Panc1 (cell line): ENCODE measurements at regions of chr2 and their contacts with region 1.

Region 1: DNA sequence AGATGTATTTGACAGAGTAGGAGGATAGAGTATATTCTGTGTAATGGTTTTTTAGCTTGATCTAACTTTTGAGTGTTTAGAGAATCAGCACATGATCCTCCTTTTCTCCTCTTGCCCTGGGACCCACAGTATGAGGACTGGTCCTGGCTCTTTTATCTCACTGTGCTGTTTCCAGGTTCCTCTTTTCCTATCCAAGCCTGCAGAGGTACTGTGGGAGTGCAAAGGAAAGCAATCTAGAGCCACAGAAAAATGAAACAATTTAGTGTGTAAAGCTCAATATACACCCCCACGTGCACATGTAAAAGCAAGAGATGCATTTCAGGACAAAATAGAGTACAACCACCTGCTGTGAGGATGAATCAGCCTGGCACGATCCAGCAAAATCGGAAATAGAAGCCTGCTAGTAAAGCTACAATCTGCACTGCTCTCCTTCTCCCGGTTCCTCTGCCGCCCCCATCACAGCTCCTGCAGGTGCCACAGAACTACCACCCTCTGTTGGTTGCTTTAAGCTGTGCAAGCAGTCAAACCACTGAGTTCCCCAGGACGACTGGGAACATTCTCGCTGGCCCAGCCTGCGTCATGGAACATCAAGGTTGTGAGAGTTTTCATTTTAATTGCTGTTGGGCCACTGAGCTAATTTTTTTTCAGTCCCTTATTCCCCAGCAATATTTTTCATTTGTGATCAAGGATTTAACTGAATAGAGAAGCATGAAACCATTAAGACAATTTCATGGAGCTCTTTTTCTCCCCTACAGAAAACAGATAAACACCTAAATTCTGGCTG is 47.8 kb upstream of the MAPRE3 start:
- DNase-seq: peak; percentile 13
- ATAC-seq: peak; percentile 92
- H3K4me3 ChIP-seq: no peak overlapping the region
- H3K27ac ChIP-seq: no peak overlapping the region
- H3K4me1 ChIP-seq: no peaks in the 10 kb centered on the region
- H3K27me3 ChIP-seq: no peaks in the 10 kb centered on the region
- CTCF ChIP-seq: peak; percentile 81

Region 2: DNA sequence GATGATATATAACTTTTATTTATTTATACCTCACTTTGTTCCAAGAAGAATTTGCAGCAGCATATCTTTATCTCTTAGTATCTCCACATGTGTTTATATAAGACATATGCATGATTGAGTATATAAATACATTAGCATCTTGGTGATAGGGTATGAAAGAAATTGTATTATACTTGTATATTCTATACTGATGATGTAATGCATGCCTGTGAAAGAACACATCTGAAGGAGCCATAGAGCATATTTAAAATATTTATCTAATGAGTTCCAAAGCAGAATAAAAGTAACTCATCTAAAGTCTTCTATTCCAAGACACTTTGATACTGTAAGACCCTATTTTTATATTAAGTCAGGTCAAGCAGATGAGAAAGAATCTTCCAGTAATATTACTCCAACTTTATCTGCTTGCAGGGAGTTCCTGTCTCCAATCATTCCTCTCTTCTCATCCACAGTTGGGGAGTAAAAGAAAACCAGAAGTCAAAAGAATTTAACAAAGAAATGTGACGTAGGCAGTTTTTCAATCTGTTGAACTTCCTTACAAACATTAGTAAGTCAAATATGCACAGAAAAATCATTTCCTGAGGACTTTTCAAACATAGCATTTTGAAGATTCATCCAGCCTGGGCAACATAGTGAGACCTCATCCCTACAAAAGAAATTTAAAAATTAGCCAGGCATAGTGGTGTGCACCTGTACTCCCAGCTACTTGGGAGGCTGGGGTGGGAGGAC is 1325.9 kb before region 1 on chr2:
- CTCF ChIA-PET with region 1: no interaction called
- POLR2A ChIA-PET with region 1: no interaction called
- in situ Hi-C with region 1: no loop called
- intact Hi-C with region 1: no loop called
- DNase-seq: no peak
- ATAC-seq: no peak
- H3K4me3 ChIP-seq: no peak overlapping the region
- H3K27ac ChIP-seq: no peak overlapping the region
- H3K4me1 ChIP-seq: no peaks in the 10 kb centered on the region
- H3K27me3 ChIP-seq: no peaks in the 10 kb centered on the region
- CTCF ChIP-seq: no peak

Region 3: DNA sequence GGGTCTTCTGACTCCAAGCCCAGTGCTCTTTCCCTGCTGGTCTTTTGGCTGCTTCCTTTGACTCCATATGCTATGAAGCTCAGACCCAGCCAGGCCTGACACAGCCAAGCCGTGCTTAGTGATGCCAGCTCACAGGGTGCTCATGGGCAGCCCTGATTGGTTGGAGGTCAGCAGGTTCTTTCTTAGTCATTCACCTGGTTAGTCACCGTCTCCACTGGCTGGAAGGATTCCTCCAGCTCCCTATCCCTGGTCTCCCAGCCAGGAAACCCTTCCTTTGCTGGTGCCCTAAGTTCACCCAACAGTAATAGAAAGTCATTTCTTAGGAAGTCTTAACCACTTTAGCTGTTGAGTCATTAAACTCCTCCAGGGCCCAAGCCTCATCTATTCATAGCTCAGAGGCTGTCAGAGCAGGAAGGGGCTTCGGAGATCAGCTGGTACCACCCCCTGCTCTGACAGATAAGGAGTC is 226.2 kb before region 1 on chr2:
- CTCF ChIA-PET with region 1: no interaction called
- POLR2A ChIA-PET with region 1: no interaction called
- in situ Hi-C with region 1: no loop called
- intact Hi-C with region 1: no loop called
- DNase-seq: peak; percentile 77
- ATAC-seq: peak; percentile 63
- H3K4me3 ChIP-seq: no peak overlapping the region
- H3K27ac ChIP-seq: no peak overlapping the region
- H3K4me1 ChIP-seq: peaks cover 6% of the 10 kb centered on the region
- H3K27me3 ChIP-seq: peaks cover 10% of the 10 kb centered on the region; the same call in 1 of the 2 replicates
- CTCF ChIP-seq: no peak

Region 4: GRCh38 chr2:26846328-26847306 is 76.0 kb before region 1 on chr2:
- CTCF ChIA-PET with region 1: interaction called, 35 read pairs
- POLR2A ChIA-PET with region 1: no interaction called
- in situ Hi-C with region 1: no loop called
- intact Hi-C with region 1: loop called (anchors 5 kb)
- DNase-seq: peak; percentile 35
- ATAC-seq: peak; percentile 76
- H3K4me3 ChIP-seq: no peak overlapping the region
- H3K27ac ChIP-seq: no peak overlapping the region
- H3K4me1 ChIP-seq: peaks cover 4% of the 10 kb centered on the region; the same call in 1 of the 2 replicates
- H3K27me3 ChIP-seq: peaks cover 30% of the 10 kb centered on the region
- CTCF ChIP-seq: peak; percentile 93

Region 5: GRCh38 chr2:27071277-27071989 is 148.8 kb after region 1 on chr2 and contains the start of gene OST4:
- CTCF ChIA-PET with region 1: no interaction called
- POLR2A ChIA-PET with region 1: interaction called, 16 read pairs
- in situ Hi-C with region 1: no loop called
- intact Hi-C with region 1: no loop called
- DNase-seq: peak; percentile 54
- ATAC-seq: peak; percentile 99
- H3K4me3 ChIP-seq: peak within 1 kb of the TSS; percentile 98 to 100
- H3K27ac ChIP-seq: peak within 1 kb of the TSS; percentile 93
- H3K4me1 ChIP-seq: peaks cover 15% of the 10 kb centered on the region
- H3K27me3 ChIP-seq: no peaks in the 10 kb centered on the region
- CTCF ChIP-seq: no peak
- total RNA-seq, gene OST4: 219 TPM